ENCODE measurements at regions of chr6 and their contacts with region 1.

Region 1: GRCh38 chr6:149264629-149265028 is 52.9 kb upstream of the TAB2 start:
- DNase-seq: peak; percentile 36
- H3K4me3 Mint-ChIP-seq: peak overlapping the region; percentile 49
- H3K27ac Mint-ChIP-seq: peak overlapping the region; percentile 77
- H3K4me1 Mint-ChIP-seq: peaks cover 64% of the 10 kb centered on the region
- H3K27me3 Mint-ChIP-seq: no peaks in the 10 kb centered on the region

Region 2: GRCh38 chr6:149278997-149279396 is 14.4 kb after region 1 on chr6:
- intact Hi-C with region 1: loop called (anchors 2 kb)
- DNase-seq: no peak
- H3K4me3 Mint-ChIP-seq: no peak overlapping the region
- H3K27ac Mint-ChIP-seq: no peak overlapping the region
- H3K4me1 Mint-ChIP-seq: peaks cover 37% of the 10 kb centered on the region
- H3K27me3 Mint-ChIP-seq: no peaks in the 10 kb centered on the region

Region 3: GRCh38 chr6:149306967-149307366 is 42.3 kb after region 1 on chr6:
- intact Hi-C with region 1: no loop called
- DNase-seq: no peak
- H3K4me3 Mint-ChIP-seq: no peak overlapping the region
- H3K27ac Mint-ChIP-seq: no peak overlapping the region
- H3K4me1 Mint-ChIP-seq: peaks cover 18% of the 10 kb centered on the region
- H3K27me3 Mint-ChIP-seq: no peaks in the 10 kb centered on the region

Region 4: DNA sequence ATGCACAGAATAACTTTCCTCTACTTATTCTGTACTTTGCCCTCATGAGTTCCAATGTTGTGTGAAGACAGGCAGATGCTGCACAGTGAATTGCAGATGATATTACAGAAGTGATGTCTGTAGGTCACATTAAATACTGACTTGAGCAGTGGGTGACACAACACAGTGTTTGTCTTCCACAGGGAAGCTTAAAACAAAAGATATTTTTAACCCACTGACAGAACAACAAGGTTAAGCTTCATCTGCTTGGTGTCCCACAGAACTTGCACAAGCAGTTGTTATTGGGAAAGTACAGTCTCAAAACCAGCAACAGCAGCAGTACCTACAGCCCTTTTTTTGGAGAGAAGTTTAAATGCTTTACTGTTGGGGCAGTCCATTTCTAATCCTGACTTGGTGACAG is 145.9 kb after region 1 on chr6:
- intact Hi-C with region 1: no loop called
- DNase-seq: no peak
- H3K4me3 Mint-ChIP-seq: no peak overlapping the region
- H3K27ac Mint-ChIP-seq: peak overlapping the region; percentile 18
- H3K4me1 Mint-ChIP-seq: peaks cover 36% of the 10 kb centered on the region
- H3K27me3 Mint-ChIP-seq: no peaks in the 10 kb centered on the region

Region 5: DNA sequence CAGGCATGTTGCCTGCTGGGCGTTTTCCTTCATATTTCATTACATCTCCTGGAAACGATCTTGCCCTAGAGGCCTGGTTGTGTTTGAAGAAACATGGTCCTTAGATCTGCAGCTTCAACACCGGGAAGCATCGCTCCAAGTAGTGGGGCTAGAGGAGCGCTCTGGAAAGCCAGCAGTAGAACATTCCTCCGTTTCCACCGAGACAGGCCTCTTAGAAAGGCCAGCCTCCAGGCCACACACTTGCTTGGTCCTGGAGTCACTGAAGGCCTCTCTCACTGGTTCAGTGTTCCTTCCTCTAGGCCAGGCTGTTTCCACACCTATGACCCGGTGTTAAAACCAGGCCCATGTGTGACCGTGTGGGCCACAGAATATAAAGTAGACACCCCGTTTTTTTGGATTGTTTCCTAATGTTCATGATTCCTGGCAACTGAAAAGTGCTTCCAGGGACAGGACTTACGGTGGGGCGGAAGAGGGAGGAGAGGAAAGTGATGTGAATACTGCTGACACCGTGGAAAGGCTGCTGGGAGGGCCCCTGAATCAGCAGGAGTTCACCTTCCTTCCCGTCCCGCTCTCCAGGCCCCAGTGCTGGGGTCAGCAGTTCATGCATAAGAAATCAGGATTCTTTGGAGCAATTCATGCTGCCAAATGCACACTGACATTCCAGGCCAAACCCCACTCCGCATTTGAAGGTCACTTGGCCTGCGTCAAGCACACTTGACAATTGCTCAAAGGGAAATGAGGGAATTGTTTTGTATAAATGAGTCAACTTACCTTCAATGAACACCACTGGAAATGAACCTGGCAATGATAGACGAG is 1188.0 kb after region 1 on chr6:
- intact Hi-C with region 1: no loop called
- DNase-seq: no peak
- H3K4me3 Mint-ChIP-seq: no peak overlapping the region
- H3K27ac Mint-ChIP-seq: no peak overlapping the region
- H3K4me1 Mint-ChIP-seq: no peaks in the 10 kb centered on the region
- H3K27me3 Mint-ChIP-seq: no peaks in the 10 kb centered on the region

Measured in activated T-helper 1 cell treated with anti-CD3 and anti-CD28 coated beads, Interleukin-12 subunit alpha, Interleukin-12 subunit beta, Interleukin-2, Interleukin-4 antibody, amounts not matched to agents 30 ng/mL and 10 ng/mL and 1 ng/mL, durations not matched to agents 14 hours and 24 hours and 36 hours (primary cell).